ENCODE measurements at regions of chr6 and their contacts with region 1.

Region 1: GRCh38 chr6:142946181-142946923 is 1.4 kb upstream of the HIVEP2 start:
- DNase-seq: peak; percentile 96
- H3K4me3 Mint-ChIP-seq: peak overlapping the region; percentile 96
- H3K27ac Mint-ChIP-seq: peak overlapping the region; percentile 99
- H3K4me1 Mint-ChIP-seq: peaks cover 28% of the 10 kb centered on the region
- H3K27me3 Mint-ChIP-seq: peaks cover 2% of the 10 kb centered on the region

Region 2: DNA sequence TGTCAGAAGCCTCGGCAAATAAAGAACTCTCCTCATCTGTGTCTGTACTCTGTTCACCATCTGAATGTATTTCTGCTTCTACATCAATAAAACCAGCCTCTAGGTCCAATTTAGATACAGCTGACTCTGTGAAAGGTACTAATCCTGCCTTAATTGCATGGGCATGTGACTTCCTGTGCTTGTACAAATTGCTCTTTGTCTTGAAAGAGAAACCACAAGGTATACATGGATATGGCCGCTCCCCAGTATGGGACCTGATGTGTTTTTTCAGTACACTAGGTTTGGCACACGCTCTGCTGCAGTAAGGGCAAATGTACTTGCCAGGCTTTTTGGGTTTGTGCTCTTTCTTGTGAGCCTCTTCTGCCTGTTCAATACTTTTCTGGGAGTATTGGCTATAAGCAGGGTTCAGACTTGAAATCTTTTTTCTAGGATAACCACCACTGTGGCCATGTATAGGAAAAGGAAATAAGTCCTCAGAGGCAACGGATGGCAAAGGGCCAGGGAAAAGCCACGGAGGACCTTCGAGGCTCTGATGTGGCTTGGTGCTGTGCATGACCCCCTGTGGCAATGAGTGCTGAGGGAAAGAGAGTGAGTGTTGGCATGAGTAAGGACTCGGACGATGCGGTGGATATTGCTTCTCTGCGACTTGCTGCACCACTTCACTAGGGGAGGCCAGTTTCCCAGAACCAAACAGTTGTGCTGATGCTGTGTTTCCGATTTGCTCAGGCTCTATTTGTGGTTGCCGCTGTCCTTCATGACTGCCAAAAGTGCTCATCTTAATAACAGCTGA is 172.3 kb before region 1 on chr6:
- CTCF ChIA-PET with region 1: interaction called, 3 read pairs
- POLR2A ChIA-PET with region 1: no interaction called
- intact Hi-C with region 1: loop called (anchors 2 kb)
- DNase-seq: peak; percentile 56
- H3K4me3 Mint-ChIP-seq: peak overlapping the region; percentile 62
- H3K27ac Mint-ChIP-seq: peak overlapping the region; percentile 93
- H3K4me1 Mint-ChIP-seq: peaks cover 62% of the 10 kb centered on the region
- H3K27me3 Mint-ChIP-seq: no peaks in the 10 kb centered on the region

Region 3: GRCh38 chr6:142885182-142885867 is 61.0 kb before region 1 on chr6:
- CTCF ChIA-PET with region 1: interaction called, 4 read pairs
- POLR2A ChIA-PET with region 1: interaction called, 8 read pairs
- intact Hi-C with region 1: loop called (anchors 1 kb)
- DNase-seq: peak; percentile 50
- H3K4me3 Mint-ChIP-seq: peak overlapping the region; percentile 93
- H3K27ac Mint-ChIP-seq: peak overlapping the region; percentile 97
- H3K4me1 Mint-ChIP-seq: peaks cover 89% of the 10 kb centered on the region
- H3K27me3 Mint-ChIP-seq: no peaks in the 10 kb centered on the region

Region 4: DNA sequence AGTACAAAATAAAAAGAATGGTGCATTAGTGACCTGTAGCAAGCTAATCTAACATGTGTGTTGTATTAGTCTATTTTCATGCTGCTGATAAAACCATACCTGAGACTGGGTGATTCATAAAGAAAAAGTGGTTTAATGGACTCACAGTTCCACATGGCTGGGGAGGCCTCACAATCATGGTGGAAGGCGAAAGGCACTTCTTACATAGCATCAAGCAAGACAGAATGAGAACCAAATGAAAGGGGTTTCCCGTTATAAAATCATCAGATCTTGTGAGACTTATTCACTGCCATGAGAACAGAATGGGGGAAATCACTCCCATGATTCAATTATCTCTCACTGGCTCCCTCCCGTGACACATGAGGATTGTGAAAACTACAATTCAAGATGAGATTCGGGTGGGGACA is 69.0 kb after region 1 on chr6:
- CTCF ChIA-PET with region 1: no interaction called
- POLR2A ChIA-PET with region 1: interaction called, 3 read pairs
- intact Hi-C with region 1: loop called (anchors 5 kb)
- DNase-seq: no peak
- H3K4me3 Mint-ChIP-seq: no peak overlapping the region
- H3K27ac Mint-ChIP-seq: peak overlapping the region; percentile 57
- H3K4me1 Mint-ChIP-seq: peaks cover 5% of the 10 kb centered on the region
- H3K27me3 Mint-ChIP-seq: no peaks in the 10 kb centered on the region

Region 5: GRCh38 chr6:143112084-143112768 is 165.9 kb after region 1 on chr6:
- CTCF ChIA-PET with region 1: no interaction called
- POLR2A ChIA-PET with region 1: no interaction called
- intact Hi-C with region 1: no loop called
- DNase-seq: no peak
- H3K4me3 Mint-ChIP-seq: no peak overlapping the region
- H3K27ac Mint-ChIP-seq: no peak overlapping the region
- H3K4me1 Mint-ChIP-seq: peaks cover 3% of the 10 kb centered on the region
- H3K27me3 Mint-ChIP-seq: no peaks in the 10 kb centered on the region

Region 6: GRCh38 chr6:143536865-143537691 is 590.7 kb after region 1 on chr6:
- CTCF ChIA-PET with region 1: no interaction called
- POLR2A ChIA-PET with region 1: interaction called, 3 read pairs
- intact Hi-C with region 1: loop called (anchors 5 kb)
- DNase-seq: peak; percentile 73
- H3K4me3 Mint-ChIP-seq: peak overlapping the region; percentile 85
- H3K27ac Mint-ChIP-seq: peak overlapping the region; percentile 80
- H3K4me1 Mint-ChIP-seq: peaks cover 39% of the 10 kb centered on the region
- H3K27me3 Mint-ChIP-seq: no peaks in the 10 kb centered on the region